Spleen (tissue), 13 donors: ENCODE measurements at regions of chr1 and their contacts with region 1.

Region 1: GRCh38 chr1:203871107-203871875 is 9.9 kb downstream of the SNRPE start:
- DNase-seq: no peak
- H3K4me3 ChIP-seq: no peak overlapping the region
- H3K27ac ChIP-seq: peak overlapping the region in 2 of 8 donors; percentile 11 to 12
- H3K4me1 ChIP-seq: peaks cover 0 to 9% (median 2%) of the 10 kb centered on the region in 6 donors
- H3K27me3 ChIP-seq: no peaks in the 10 kb centered on the region
- CTCF ChIP-seq: peak in 10 of 11 experiments; percentile 26 to 80 (median 62)
- POLR2A ChIP-seq: no peak

Region 2: DNA sequence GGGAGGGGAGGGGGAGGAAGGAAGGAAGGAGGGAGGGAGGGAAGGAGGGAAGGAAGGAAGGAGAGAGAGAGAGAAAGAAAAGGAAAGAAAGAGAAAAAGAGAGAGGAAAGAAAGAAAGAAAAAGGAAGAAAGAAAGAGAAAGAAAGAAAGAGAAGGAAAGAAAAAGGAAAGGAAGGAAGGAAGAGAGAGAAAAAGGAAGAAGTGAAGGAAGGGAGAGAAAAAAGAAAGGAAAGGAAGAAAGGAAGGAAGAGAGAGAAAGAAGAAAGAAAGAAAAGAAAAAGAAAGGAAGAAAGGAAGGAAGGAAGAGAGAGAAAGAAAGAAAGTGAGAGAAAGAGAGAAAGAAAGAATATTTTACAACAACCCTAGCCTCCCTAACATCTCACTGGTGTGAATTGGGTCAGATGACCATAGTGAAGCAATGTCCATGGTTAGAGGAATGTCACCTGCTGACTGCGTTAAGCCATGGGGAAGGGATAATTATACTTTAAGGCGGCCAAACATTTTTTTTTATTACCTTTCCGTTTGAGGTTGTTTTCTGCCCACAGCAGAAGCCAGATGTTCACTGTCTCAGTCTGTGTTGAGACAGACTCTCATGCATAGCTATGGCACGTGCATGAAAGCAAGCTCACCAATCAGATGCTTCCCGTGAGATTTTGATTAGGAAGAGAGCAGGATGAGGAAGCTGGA is 66.5 kb after region 1 on chr1:
- intact Hi-C with region 1: no loop called
- DNase-seq: no peak
- H3K4me3 ChIP-seq: no peak overlapping the region
- H3K27ac ChIP-seq: no peak overlapping the region
- H3K4me1 ChIP-seq: peaks cover 0 to 1% (median 0%) of the 10 kb centered on the region in 6 donors
- H3K27me3 ChIP-seq: peaks cover 0 to 52% (median 4%) of the 10 kb centered on the region in 7 donors
- CTCF ChIP-seq: no peak
- POLR2A ChIP-seq: no peak

Region 3: GRCh38 chr1:204128964-204129896 is 257.9 kb after region 1 on chr1:
- intact Hi-C with region 1: loop called (anchors 5 kb)
- DNase-seq: peak; percentile 91
- H3K4me3 ChIP-seq: peak overlapping the region in 1 of 8 donors; percentile 28
- H3K27ac ChIP-seq: peak overlapping the region in 1 of 8 donors; percentile 36
- H3K4me1 ChIP-seq: peaks cover 0 to 40% (median 17%) of the 10 kb centered on the region in 6 donors
- H3K27me3 ChIP-seq: peaks cover 0 to 17% (median 0%) of the 10 kb centered on the region in 7 donors
- CTCF ChIP-seq: peak; percentile 61 to 96 (median 89)
- POLR2A ChIP-seq: no peak